ENCODE measurements at regions of chr3 and their contacts with region 1.

Region 1: DNA sequence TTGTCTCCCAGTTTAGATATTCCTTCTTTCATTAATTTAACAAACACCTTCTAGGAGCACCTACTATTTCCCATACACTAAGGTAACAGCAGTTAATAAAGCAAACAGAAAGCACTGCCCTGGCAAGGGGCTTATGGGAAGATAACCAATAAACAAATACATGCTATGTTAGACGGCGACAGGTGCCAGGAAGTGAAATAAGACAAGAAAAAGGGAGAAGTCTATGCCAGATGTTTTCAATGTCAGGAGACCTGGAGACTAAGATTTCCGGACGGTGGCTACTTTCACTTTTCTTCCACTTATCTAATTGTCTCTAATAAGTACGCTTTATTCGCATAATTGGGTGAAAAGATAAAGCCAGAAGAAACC is 32.5 kb upstream of the ZNF445 start:
- DNase-seq: peak; percentile 10
- H3K4me3 ChIP-seq: peak overlapping the region; percentile 75 to 100 (median 96)
- H3K27ac ChIP-seq: peak overlapping the region; percentile 73
- H3K4me1 ChIP-seq: peaks cover 6% of the 10 kb centered on the region
- H3K27me3 ChIP-seq: no peaks in the 10 kb centered on the region
- CTCF ChIP-seq: no peak

Region 2: GRCh38 chr3:44338010-44338827 is 171.8 kb before region 1 on chr3 and contains the start of gene TCAIM:
- CTCF ChIA-PET with region 1: no interaction called
- dilution Hi-C with region 1: no loop called
- in situ Hi-C with region 1: no loop called
- intact Hi-C with region 1: loop called (anchors 5 kb)
- DNase-seq: peak; percentile 98
- H3K4me3 ChIP-seq: peak within 1 kb of the TSS; percentile 89 to 95 (median 95)
- H3K27ac ChIP-seq: peak within 1 kb of the TSS; percentile 83
- H3K4me1 ChIP-seq: peaks cover 13% of the 10 kb centered on the region
- H3K27me3 ChIP-seq: no peaks in the 10 kb centered on the region
- CTCF ChIP-seq: no peak
- total RNA-seq, gene TCAIM: 19.5 to 21.7 TPM

Region 3: GRCh38 chr3:44477312-44478030 is 32.5 kb before region 1 on chr3 and contains the start of gene ZNF445:
- CTCF ChIA-PET with region 1: no interaction called
- dilution Hi-C with region 1: no loop called
- in situ Hi-C with region 1: no loop called
- intact Hi-C with region 1: loop called (anchors 2 kb)
- DNase-seq: peak; percentile 71
- H3K4me3 ChIP-seq: peak within 1 kb of the TSS; percentile 57 to 90 (median 77)
- H3K27ac ChIP-seq: peak within 1 kb of the TSS; percentile 33
- H3K4me1 ChIP-seq: peaks cover 10% of the 10 kb centered on the region
- H3K27me3 ChIP-seq: no peaks in the 10 kb centered on the region
- CTCF ChIP-seq: no peak
- total RNA-seq, gene ZNF445: 7.5 to 14.2 TPM